ENCODE measurements at regions of chr11 and their contacts with region 1.

Region 1: GRCh38 chr11:65512306-65512705 is 12.6 kb upstream of the SCYL1 start:
- DNase-seq: no peak

Region 2: DNA sequence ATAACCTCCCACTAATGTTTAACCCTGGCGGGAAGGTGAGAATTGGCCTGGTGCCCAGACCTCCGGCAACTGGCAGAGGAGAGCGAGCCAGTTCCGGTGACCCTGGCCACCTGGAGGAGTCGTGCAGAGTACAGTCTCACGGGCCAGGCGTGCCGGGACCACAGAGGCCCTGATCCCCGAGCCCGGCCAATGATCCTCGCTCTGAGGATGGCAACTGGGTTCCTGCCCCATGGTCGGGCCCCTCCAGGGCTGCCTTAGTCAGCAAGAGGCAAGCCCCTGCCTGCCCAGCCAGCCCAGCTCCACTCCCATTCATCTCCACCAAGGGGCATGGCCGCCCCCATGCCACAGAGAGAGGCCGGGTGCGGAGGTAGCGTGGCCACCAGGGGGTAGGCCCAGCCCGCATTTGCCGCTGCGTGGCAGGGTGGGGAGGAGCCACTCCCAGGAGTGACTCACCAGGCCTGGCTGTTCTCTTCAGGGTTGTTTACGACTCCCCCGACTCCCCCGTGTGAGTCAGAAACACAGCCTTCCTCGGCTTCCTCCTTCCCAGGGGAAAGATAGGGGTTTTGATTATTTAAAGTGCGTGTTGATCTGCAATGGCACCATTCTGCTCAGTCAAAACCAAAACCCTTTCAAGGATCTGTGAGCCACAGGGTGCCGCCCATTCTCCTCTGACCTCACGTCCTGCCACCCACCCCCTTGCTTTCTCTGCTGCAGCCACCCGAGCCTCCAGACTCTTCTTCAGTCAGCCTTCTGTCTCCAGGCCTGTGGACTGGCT is 130.1 kb before region 1 on chr11 and contains the start of gene SLC25A45:
- intact Hi-C with region 1: loop called (anchors 5 kb)
- DNase-seq: peak; percentile 97
- total RNA-seq, gene SLC25A45: 10.5 TPM

Region 3: GRCh38 chr11:65429724-65430405 is 82.4 kb before region 1 on chr11:
- intact Hi-C with region 1: no loop called
- DNase-seq: peak; percentile 90

Region 4: DNA sequence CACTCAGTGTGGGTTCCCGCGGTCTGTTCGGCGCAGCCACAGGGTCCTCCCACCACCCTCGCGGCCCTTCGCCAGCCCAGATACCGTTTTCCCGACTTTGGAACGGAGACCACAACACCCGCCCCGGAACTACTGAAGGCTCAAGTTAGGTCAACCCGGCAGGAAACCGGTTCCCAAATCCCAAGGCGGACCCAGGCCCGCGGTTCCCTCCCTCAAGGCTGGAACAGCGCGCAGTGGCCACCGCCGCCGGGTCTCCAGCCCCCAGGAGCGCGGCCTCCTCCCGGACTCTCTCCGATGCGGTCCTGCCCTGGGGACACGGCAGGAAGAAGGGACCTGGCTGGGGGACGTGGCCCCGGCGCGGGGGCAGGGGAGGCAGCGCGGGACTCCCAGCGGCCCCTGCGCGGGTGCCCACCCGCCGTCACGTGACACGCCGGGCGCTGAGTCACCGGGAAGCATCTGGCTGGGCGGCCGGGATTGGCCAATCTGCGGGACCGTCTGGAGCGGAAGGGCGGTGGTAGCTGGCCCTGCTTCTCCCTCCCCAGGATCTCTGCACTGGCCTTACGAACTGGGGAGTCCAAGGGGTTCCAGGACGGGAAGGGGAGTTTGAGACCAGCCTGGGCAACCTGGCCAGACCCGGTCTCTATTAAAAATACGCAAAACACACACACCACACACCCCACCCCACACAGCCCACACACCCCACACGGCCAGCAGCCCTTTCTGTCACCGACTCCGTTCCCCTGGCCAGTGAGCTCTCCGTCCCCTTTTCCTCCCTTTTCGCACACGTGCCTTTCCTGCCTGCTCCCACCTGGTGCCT is 34.9 kb before region 1 on chr11:
- intact Hi-C with region 1: no loop called
- DNase-seq: peak; percentile 99